Adrenal gland (tissue), 19 donors: ENCODE measurements at regions of chr1 and their contacts with region 1.

Region 1: DNA sequence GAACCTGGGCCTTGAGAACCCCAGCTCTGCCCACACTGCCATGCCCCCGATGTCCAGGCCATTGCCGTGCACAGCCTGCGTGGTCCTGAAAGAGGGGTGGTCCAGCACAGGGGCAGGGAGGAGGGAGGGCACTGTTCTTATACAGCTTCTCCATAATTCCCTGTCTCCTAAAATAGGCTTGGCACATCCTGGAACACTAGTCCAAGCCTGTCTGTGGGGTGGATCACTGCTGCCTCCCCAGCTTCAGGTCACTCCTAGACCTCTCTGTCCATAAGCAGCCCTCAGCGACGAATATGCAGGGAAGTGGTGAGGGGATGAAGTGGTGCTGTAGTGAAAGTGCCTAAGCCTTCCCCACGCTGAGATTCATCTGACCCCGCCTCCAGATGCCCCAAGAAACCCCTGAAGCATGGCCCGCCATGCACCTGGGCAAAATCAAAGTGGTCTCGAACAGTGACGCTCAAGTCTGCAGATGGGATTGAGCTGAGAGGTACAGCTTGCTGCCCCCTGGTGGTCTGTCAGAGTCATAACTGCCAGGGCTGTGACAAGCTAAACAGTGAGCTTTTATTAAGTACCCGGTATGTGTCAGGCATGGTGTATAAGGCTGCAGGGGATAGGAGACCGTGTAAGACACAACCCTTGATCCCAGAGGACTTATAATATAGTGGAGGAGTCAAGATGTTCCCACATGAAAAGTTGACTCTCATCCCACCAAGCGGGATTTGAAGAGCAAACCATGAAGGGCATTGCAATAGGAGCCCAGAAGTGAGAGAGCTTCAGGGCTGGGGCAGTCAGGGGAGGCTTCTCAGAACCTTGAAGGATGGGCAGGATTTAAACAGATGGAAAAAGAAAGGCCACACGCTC is 66.6 kb downstream of the FAM163A start:
- DNase-seq: peak; percentile 32 to 87 (median 51)
- H3K4me3 ChIP-seq: no peak overlapping the region
- H3K27ac ChIP-seq: peak overlapping the region in 1 of 5 donors; percentile 34
- H3K4me1 ChIP-seq: peaks cover 0 to 7% of the 10 kb centered on the region in 2 donors
- H3K27me3 ChIP-seq: no peaks in the 10 kb centered on the region
- CTCF ChIP-seq: peak; percentile 78 to 93 (median 89)
- POLR2A ChIP-seq: no peak

Region 2: GRCh38 chr1:179264506-179264905 is 545.2 kb before region 1 on chr1:
- intact Hi-C with region 1: loop called in 1 of 2 experiments (anchors 10 kb)
- DNase-seq: no peak
- H3K4me3 ChIP-seq: no peak overlapping the region
- H3K27ac ChIP-seq: no peak overlapping the region
- H3K4me1 ChIP-seq: no peaks in the 10 kb centered on the region
- H3K27me3 ChIP-seq: no peaks in the 10 kb centered on the region
- CTCF ChIP-seq: no peak
- POLR2A ChIP-seq: no peak

Region 3: GRCh38 chr1:179545321-179545720 is 264.4 kb before region 1 on chr1:
- intact Hi-C with region 1: no loop called
- DNase-seq: peak in 6 of 7 donors; percentile 33 to 57 (median 49)
- H3K4me3 ChIP-seq: no peak overlapping the region
- H3K27ac ChIP-seq: no peak overlapping the region
- H3K4me1 ChIP-seq: peaks cover 0 to 10% of the 10 kb centered on the region in 2 donors
- H3K27me3 ChIP-seq: no peaks in the 10 kb centered on the region
- CTCF ChIP-seq: no peak
- POLR2A ChIP-seq: no peak

Region 4: DNA sequence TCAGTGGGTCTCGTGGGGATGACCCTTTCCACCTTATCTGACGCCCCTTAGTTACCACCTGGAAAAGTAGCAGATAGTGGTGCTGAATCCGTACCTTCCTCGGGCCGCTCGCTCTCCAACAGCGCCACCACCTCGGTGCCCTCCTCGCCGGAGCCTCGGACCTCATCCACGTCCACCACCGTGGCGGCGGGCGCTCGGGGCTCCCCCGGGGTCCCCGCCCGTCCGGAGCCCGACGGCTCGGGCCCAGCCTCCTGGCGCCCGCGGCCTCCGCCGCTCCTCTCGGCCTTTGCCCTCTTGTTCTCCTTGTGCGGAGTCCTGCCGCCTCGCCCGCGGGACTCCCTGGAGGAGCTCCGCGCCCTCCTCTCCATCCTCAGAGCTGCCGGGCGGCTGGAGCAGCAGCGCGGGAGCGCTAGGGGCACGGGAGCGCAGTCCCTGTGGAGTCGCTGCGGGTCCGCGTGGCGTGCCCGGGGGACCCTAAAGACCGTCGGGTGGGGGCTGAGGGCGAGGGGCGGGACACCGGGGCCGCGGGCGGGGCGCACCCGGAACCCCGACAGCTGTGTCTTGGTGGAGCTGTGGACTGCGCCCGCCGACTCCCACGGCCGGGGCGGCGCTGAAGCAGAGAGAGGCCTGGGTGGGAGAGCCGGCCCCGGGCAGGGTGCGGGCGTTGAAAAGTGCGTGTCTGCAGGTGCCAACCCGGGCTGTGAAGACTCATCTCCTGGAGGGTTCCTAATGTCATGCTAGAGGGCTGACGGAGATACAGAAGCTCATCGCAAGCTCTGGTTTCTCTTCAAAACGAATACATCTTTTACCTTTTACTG is 234.0 kb before region 1 on chr1 and contains the start of gene NPHS2:
- intact Hi-C with region 1: no loop called
- DNase-seq: no peak
- H3K4me3 ChIP-seq: peak within 1 kb of the TSS in 1 of 4 donors; percentile 26
- H3K27ac ChIP-seq: no peak within 1 kb of the TSS
- H3K4me1 ChIP-seq: peaks cover 5 to 6% of the 10 kb centered on the region in 2 donors
- H3K27me3 ChIP-seq: peaks cover 29% of the 10 kb centered on the region
- CTCF ChIP-seq: no peak
- POLR2A ChIP-seq: no peak
- total RNA-seq, gene NPHS2: not detected

Region 5: GRCh38 chr1:179706339-179706941 is 103.3 kb before region 1 on chr1:
- intact Hi-C with region 1: loop called (anchors 2 to 5 kb)
- DNase-seq: peak; percentile 43 to 79 (median 61)
- H3K4me3 ChIP-seq: no peak overlapping the region
- H3K27ac ChIP-seq: no peak overlapping the region
- H3K4me1 ChIP-seq: peaks cover 0 to 15% of the 10 kb centered on the region in 2 donors
- H3K27me3 ChIP-seq: no peaks in the 10 kb centered on the region
- CTCF ChIP-seq: peak; percentile 78 to 87 (median 81)
- POLR2A ChIP-seq: no peak

Region 6: GRCh38 chr1:180178511-180179161 is 368.9 kb after region 1 on chr1:
- intact Hi-C with region 1: no loop called
- DNase-seq: peak; percentile 59 to 84 (median 69)
- H3K4me3 ChIP-seq: no peak overlapping the region
- H3K27ac ChIP-seq: no peak overlapping the region
- H3K4me1 ChIP-seq: peaks cover 5 to 7% of the 10 kb centered on the region in 2 donors
- H3K27me3 ChIP-seq: no peaks in the 10 kb centered on the region
- CTCF ChIP-seq: peak; percentile 85 to 96 (median 91)
- POLR2A ChIP-seq: no peak